Activated CD4-positive, alpha-beta memory T cell treated with anti-CD3 and anti-CD28 coated beads for 36 hours (primary cell): ENCODE measurements at regions of chr14 and their contacts with region 1.

Region 1: DNA sequence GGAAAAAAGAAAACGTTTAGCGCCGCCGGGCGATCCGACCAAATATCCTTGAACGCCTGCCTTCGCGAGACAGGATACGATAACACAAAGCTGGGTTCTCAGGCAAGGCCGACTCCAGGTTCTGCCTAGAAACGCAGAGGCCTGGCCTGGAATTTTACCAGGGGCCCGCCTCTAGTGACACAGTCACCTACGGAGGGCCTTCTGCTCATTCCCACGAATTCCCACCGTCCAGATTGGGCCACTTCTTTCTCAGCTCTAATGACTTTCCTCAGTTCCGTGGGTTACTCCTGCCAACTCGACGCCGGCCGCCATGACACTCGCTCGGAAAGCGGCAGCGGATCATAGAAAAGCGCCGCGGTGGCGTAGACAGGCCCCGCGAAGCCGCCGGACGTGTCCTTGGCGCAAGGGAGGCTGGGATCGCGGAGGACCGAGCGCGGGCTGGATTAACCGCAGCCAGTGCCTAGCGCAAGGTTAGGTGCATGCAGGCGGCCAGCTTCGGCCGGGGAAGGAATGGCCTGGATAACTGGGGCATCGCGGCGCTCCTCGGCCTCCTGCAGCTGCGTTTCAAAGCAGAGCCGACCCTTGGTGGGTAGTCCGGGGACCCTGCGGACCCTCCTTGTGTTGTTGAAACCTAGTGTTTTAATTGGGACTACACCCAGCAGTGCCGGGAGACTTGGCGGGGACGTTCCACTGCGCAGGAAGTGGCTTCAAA is at the start of gene TRIP11:
- DNase-seq: peak; percentile 97
- H3K4me3 Mint-ChIP-seq: peak within 1 kb of the TSS; percentile 90
- H3K27ac Mint-ChIP-seq: peak within 1 kb of the TSS; percentile 93
- H3K4me1 Mint-ChIP-seq: peaks cover 31% of the 10 kb centered on the region
- H3K27me3 Mint-ChIP-seq: no peaks in the 10 kb centered on the region
- total RNA-seq, gene TRIP11: 35.9 to 37.0 TPM

Region 2: GRCh38 chr14:92121670-92122350 is 81.9 kb after region 1 on chr14 and contains the starts of genes CPSF2 and NDUFB1:
- CTCF ChIA-PET with region 1: interaction called, 4 read pairs
- POLR2A ChIA-PET with region 1: interaction called, 17 read pairs
- intact Hi-C with region 1: loop called (anchors 1 kb)
- DNase-seq: peak; percentile 88
- H3K4me3 Mint-ChIP-seq: peak within 1 kb of the TSS; percentile 94
- H3K27ac Mint-ChIP-seq: peak within 1 kb of the TSS; percentile 97
- H3K4me1 Mint-ChIP-seq: peaks cover 27% of the 10 kb centered on the region
- H3K27me3 Mint-ChIP-seq: no peaks in the 10 kb centered on the region
- total RNA-seq, gene CPSF2: 100 to 105 TPM
- total RNA-seq, gene NDUFB1: 131 to 143 TPM